ENCODE measurements at regions of chrX and their contacts with region 1.

Region 1: DNA sequence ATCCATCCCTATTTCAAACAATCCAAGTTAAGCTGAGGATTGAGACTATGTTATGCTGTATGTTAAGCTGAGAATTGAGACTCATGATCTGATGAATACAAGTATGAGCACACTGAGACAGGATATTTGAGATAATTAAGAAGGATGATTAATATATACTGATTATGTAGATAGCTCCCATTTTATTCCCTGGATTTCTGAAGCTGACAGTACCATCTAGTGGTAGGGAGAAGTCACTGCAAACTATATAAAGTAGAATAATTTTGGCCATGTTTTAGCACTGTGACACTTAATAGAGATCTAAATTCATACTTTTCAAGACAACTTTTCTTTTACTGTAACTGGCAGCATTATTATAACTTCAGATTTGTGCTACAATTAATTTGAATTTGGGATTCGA is 63.8 kb upstream of the HPRT1 start:
- DNase-seq: peak; percentile 37
- ATAC-seq: peak; percentile 40; the same call in 1 of the 2 replicates
- H3K4me3 ChIP-seq: no peak overlapping the region
- H3K27ac ChIP-seq: no peak overlapping the region
- H3K4me1 ChIP-seq: no peaks in the 10 kb centered on the region
- H3K27me3 ChIP-seq: no peaks in the 10 kb centered on the region
- CTCF ChIP-seq: peak; percentile 75

Region 2: DNA sequence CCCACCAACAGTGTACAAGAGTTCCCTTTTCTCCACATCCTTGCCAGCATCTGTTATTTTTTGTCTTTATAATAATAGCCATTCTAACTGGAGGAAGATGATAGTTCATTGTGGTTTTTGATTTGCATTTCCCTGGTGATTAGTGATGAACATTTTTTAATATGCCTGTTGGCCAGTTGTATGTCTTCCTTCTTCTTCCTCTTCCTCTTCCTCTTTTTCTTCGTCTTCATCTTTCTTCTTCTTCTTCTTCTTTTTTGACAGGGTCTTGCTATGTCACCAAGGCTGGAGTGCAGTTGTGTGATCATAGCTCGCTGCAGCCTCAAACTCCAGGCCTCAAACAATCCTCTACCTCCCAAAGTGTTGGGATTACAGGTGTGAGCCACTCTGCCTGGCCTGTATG is 71.8 kb before region 1 on chrX:
- CTCF ChIA-PET with region 1: no interaction called
- POLR2A ChIA-PET with region 1: no interaction called
- intact Hi-C with region 1: no loop called
- DNase-seq: no peak
- ATAC-seq: no peak
- H3K4me3 ChIP-seq: no peak overlapping the region
- H3K27ac ChIP-seq: no peak overlapping the region
- H3K4me1 ChIP-seq: no peaks in the 10 kb centered on the region
- H3K27me3 ChIP-seq: no peaks in the 10 kb centered on the region
- CTCF ChIP-seq: no peak

Region 3: GRCh38 chrX:134377537-134377936 is 18.6 kb before region 1 on chrX:
- CTCF ChIA-PET with region 1: interaction called, 3 read pairs
- POLR2A ChIA-PET with region 1: no interaction called
- intact Hi-C with region 1: loop called (anchors 1 kb)
- DNase-seq: peak; percentile 60
- ATAC-seq: no peak
- H3K4me3 ChIP-seq: no peak overlapping the region
- H3K27ac ChIP-seq: no peak overlapping the region
- H3K4me1 ChIP-seq: no peaks in the 10 kb centered on the region; the same call in 1 of the 2 replicates
- H3K27me3 ChIP-seq: no peaks in the 10 kb centered on the region
- CTCF ChIP-seq: peak; percentile 67